CD8-positive, alpha-beta memory T cell (primary cell): ENCODE measurements at regions of chr12 and their contacts with region 1.

Region 1: DNA sequence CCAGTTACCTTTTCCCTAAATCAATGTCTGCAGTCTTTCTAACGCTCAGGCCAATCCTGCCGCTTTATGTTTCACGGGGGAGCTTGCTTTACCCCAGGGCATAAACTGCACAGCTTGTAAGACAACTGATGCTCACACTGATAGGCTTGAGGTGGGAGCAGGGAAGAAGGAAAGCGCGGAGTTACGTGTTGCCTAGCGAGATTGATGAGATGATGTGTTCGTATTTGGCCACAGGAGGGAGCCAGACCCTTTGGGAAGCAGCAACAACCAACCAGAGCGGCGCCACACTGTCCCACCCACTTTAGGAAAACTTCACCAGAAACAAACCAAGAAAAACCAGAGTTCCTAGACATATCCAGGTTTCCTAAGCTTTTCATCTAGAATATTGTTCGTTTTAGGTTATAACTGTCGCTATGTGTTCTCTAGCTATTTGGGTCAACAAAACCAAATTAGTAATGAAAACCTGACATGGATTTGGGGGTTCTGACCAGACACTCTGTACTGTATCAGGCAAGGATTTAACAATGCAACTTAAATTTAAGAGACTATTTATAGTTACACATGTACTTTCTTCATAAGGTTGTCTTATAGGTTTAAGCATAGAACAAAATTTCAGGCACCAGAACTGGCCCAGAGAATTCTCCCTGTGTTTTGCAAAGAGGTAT is 2.4 kb downstream of the IL26 start:
- DNase-seq: peak; percentile 51 to 74 (median 65)
- H3K4me3 ChIP-seq: no peak overlapping the region
- H3K4me3 Mint-ChIP-seq: peak overlapping the region; percentile 15 to 76 (median 67)
- H3K27ac ChIP-seq: no peak overlapping the region
- H3K27ac Mint-ChIP-seq: peak overlapping the region in 6 of 8 donors; percentile 0 to 60 (median 40)
- H3K4me1 ChIP-seq: peaks cover 6% of the 10 kb centered on the region
- H3K4me1 Mint-ChIP-seq: peaks cover 7 to 12% (median 10%) of the 10 kb centered on the region in 3 donors
- H3K27me3 ChIP-seq: no peaks in the 10 kb centered on the region
- H3K27me3 Mint-ChIP-seq: peaks cover 0 to 3% of the 10 kb centered on the region in 2 donors

Region 2: DNA sequence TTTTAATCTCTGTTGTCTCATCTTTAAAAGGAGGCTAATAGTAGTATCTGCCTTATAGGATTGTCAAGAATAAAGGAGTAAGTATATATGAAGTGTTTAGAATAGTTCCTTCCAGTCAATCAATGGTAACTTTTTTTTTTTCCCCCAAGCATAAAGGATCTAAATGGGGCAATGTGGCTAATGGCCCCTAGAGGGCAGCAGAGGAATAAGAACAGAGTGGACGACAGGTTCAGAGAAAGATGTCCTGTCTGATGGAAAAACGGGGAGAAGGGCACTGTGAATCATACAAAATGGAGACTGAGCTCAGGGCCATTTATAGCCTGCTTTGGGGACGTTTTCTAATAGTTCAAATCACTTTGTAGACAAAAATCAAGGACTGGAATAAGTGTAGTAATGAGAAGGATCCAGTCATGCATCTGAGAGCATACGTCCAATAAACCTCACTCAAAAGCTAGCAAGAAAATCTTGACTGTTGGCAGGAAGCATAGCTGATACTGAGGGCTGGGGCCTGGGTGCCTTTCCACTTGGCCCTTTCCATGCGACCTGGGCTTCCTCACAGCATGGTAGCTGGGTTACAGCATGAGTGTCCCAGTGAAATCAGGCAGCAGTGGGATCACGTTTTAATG is 182.7 kb before region 1 on chr12:
- CTCF ChIA-PET with region 1: interaction called, 22 read pairs
- POLR2A ChIA-PET with region 1: no interaction called
- DNase-seq: peak; percentile 39 to 76 (median 58)
- H3K4me3 ChIP-seq: no peak overlapping the region
- H3K4me3 Mint-ChIP-seq: peak overlapping the region in 2 of 7 donors; percentile 41 to 51
- H3K27ac ChIP-seq: no peak overlapping the region
- H3K27ac Mint-ChIP-seq: peak overlapping the region in 6 of 8 donors; percentile 8 to 75 (median 34)
- H3K4me1 ChIP-seq: no peaks in the 10 kb centered on the region
- H3K4me1 Mint-ChIP-seq: peaks cover 29 to 53% (median 48%) of the 10 kb centered on the region in 3 donors
- H3K27me3 ChIP-seq: no peaks in the 10 kb centered on the region
- H3K27me3 Mint-ChIP-seq: no peaks in the 10 kb centered on the region

Region 3: GRCh38 chr12:68198507-68199086 is 24.6 kb before region 1 on chr12:
- CTCF ChIA-PET with region 1: interaction called, 10 read pairs
- POLR2A ChIA-PET with region 1: no interaction called
- DNase-seq: no peak
- H3K4me3 ChIP-seq: no peak overlapping the region
- H3K4me3 Mint-ChIP-seq: peak overlapping the region; percentile 62 to 88 (median 83)
- H3K27ac ChIP-seq: no peak overlapping the region
- H3K27ac Mint-ChIP-seq: peak overlapping the region in 7 of 8 donors; percentile 43 to 93 (median 88)
- H3K4me1 ChIP-seq: peaks cover 22% of the 10 kb centered on the region
- H3K4me1 Mint-ChIP-seq: peaks cover 38 to 55% (median 46%) of the 10 kb centered on the region in 3 donors
- H3K27me3 ChIP-seq: no peaks in the 10 kb centered on the region
- H3K27me3 Mint-ChIP-seq: no peaks in the 10 kb centered on the region

Region 4: DNA sequence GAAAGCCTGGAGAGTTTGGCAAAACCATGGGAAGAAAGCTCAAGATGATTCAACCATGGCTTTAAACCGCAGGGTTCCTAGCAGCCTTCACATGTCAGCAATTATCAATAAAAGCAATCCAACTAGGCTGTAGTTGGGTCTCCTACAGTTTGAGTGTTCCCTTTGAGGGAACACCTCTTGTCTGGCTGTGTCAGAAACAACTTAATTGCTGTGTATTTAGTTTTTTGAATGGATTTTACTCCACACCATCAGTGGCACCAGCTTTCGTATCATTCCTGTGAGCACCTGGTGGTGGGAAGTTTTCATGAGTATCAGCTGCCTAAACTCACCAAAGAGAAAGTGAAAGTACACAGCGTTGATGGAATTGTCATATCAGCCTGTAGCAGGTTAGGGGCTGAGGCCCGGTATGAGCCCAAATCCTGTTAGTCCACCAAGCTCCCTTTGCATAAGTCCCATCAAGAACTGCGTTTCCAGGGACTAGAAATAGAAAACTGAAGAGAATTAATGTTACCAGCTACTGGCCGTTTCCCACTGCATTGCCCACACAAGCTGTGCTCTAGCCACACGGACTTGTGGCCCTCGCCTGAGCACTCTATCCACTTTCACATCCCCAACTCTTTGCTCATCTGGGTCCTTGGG is 13.3 kb after region 1 on chr12:
- CTCF ChIA-PET with region 1: interaction called, 25 read pairs
- POLR2A ChIA-PET with region 1: interaction called, 3 read pairs
- DNase-seq: peak in 4 of 5 donors; percentile 11 to 62 (median 56)
- H3K4me3 ChIP-seq: peak overlapping the region; percentile 52
- H3K4me3 Mint-ChIP-seq: peak overlapping the region; percentile 76 to 96 (median 89)
- H3K27ac ChIP-seq: no peak overlapping the region
- H3K27ac Mint-ChIP-seq: peak overlapping the region; percentile 68 to 97 (median 94)
- H3K4me1 ChIP-seq: peaks cover 35% of the 10 kb centered on the region
- H3K4me1 Mint-ChIP-seq: peaks cover 38 to 58% (median 49%) of the 10 kb centered on the region in 3 donors
- H3K27me3 ChIP-seq: no peaks in the 10 kb centered on the region
- H3K27me3 Mint-ChIP-seq: peaks cover 0 to 3% of the 10 kb centered on the region in 2 donors

Region 5: GRCh38 chr12:68317047-68317667 is 93.9 kb after region 1 on chr12:
- CTCF ChIA-PET with region 1: interaction called, 38 read pairs
- POLR2A ChIA-PET with region 1: no interaction called
- DNase-seq: peak; percentile 24 to 47 (median 38)
- H3K4me3 ChIP-seq: no peak overlapping the region
- H3K4me3 Mint-ChIP-seq: no peak overlapping the region
- H3K27ac ChIP-seq: no peak overlapping the region
- H3K27ac Mint-ChIP-seq: no peak overlapping the region
- H3K4me1 ChIP-seq: no peaks in the 10 kb centered on the region
- H3K4me1 Mint-ChIP-seq: no peaks in the 10 kb centered on the region
- H3K27me3 ChIP-seq: no peaks in the 10 kb centered on the region
- H3K27me3 Mint-ChIP-seq: no peaks in the 10 kb centered on the region